Activated CD4-positive, alpha-beta memory T cell treated with anti-CD3 and anti-CD28 coated beads for 36 hours (primary cell): ENCODE measurements at regions of chr10 and their contacts with region 1.

Region 1: DNA sequence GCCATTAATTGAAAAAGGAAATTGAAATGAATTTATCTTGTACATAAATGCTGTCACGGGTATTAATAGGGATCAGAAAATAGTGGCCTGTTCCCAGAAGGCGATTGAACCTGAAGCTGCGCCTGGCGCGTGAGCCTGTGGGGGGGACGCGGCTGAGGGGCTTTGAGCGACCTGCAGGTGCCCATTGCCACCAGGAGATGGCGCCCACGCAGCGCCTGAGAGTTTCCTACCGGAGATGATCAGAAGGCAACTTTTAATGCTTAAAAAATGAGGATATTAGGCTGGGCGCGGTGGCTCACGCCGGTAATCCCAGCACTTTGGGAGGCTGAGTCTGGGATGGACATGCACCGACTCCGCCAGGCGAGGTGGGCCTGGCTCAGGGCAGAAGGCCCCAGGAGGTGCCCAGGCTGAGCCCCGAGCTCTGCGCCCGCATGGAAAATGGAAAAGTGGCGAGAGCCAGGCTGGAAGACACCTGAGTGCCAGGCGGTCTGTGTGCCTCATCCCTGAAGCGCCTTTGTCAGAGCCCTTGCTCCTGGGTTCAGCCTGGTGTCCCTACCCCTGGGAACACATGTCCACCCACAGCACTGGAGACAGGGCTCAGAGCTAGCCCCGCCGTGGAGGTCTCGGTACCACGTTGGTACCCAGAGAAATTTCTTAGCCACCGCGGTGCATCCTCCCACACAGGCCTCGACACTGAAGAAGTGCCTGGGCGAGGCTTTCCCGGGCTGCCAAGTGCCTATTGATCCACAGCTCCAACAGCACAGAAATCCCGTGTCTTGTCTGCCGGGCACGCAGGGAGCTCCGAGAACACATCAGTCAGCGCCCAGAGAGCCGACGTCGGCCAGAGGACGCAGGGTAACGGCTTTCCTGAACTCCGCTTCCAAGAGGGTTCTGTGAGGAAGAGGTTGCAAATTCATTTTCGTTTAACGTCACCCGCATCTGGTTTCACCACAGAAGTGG is 117.4 kb downstream of the INPP5A start:
- DNase-seq: peak; percentile 68
- H3K4me3 Mint-ChIP-seq: no peak overlapping the region
- H3K27ac Mint-ChIP-seq: no peak overlapping the region
- H3K4me1 Mint-ChIP-seq: no peaks in the 10 kb centered on the region
- H3K27me3 Mint-ChIP-seq: no peaks in the 10 kb centered on the region

Region 2: DNA sequence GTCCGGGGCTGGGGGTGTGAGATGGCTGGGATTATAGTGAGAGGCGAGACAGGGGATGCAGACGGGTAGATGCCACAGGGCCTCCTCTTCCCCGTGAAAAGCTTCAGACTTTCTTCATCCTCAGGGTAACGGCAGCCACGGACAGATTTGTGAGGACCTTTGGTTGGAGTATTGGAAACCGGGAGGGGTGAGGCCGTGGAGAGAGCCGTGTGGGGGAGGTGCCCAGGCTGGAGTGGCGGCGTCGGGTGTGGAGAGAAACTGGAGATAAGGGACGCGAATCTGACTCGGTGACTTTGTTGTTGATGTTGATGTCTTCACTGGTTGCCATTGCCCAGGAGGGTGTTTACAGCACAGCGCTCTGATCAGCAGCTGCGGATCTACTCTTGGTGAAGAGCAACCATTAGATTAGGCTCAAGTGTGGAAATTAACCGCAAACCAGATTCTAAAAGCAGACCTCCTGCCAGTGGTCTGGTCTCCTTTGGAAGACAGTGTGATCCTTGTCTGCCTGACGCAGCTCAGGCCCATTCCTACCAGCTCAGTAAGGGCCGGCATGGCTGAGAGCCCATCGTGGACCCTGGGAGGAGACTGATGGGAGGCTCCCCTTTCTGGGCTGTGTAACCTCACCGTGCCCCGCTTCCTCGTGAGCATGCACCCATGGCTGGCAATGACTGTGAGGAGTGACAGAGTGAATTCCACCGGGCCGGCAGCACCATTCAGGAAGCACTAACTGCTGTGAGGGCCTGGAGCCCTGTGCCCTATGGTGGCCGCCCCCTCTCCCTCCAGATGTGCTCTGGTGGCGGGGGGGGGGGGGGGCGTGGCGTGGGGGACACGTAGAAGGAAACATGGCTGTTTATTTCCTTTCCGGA is 27.1 kb before region 1 on chr10:
- CTCF ChIA-PET with region 1: no interaction called
- POLR2A ChIA-PET with region 1: no interaction called
- intact Hi-C with region 1: no loop called
- DNase-seq: peak; percentile 17
- H3K4me3 Mint-ChIP-seq: no peak overlapping the region
- H3K27ac Mint-ChIP-seq: no peak overlapping the region
- H3K4me1 Mint-ChIP-seq: peaks cover 13% of the 10 kb centered on the region
- H3K27me3 Mint-ChIP-seq: no peaks in the 10 kb centered on the region

Region 3: GRCh38 chr10:132665946-132666704 is 11.1 kb after region 1 on chr10:
- CTCF ChIA-PET with region 1: interaction called, 13 read pairs
- POLR2A ChIA-PET with region 1: no interaction called
- intact Hi-C with region 1: no loop called
- DNase-seq: peak; percentile 55
- H3K4me3 Mint-ChIP-seq: no peak overlapping the region
- H3K27ac Mint-ChIP-seq: no peak overlapping the region
- H3K4me1 Mint-ChIP-seq: peaks cover 12% of the 10 kb centered on the region
- H3K27me3 Mint-ChIP-seq: no peaks in the 10 kb centered on the region

Region 4: GRCh38 chr10:132788180-132788830 is 133.3 kb after region 1 on chr10:
- CTCF ChIA-PET with region 1: interaction called, 15 read pairs
- POLR2A ChIA-PET with region 1: no interaction called
- intact Hi-C with region 1: loop called (anchors 5 kb)
- DNase-seq: peak; percentile 20
- H3K4me3 Mint-ChIP-seq: no peak overlapping the region
- H3K27ac Mint-ChIP-seq: no peak overlapping the region
- H3K4me1 Mint-ChIP-seq: no peaks in the 10 kb centered on the region
- H3K27me3 Mint-ChIP-seq: peaks cover 15% of the 10 kb centered on the region

Region 5: DNA sequence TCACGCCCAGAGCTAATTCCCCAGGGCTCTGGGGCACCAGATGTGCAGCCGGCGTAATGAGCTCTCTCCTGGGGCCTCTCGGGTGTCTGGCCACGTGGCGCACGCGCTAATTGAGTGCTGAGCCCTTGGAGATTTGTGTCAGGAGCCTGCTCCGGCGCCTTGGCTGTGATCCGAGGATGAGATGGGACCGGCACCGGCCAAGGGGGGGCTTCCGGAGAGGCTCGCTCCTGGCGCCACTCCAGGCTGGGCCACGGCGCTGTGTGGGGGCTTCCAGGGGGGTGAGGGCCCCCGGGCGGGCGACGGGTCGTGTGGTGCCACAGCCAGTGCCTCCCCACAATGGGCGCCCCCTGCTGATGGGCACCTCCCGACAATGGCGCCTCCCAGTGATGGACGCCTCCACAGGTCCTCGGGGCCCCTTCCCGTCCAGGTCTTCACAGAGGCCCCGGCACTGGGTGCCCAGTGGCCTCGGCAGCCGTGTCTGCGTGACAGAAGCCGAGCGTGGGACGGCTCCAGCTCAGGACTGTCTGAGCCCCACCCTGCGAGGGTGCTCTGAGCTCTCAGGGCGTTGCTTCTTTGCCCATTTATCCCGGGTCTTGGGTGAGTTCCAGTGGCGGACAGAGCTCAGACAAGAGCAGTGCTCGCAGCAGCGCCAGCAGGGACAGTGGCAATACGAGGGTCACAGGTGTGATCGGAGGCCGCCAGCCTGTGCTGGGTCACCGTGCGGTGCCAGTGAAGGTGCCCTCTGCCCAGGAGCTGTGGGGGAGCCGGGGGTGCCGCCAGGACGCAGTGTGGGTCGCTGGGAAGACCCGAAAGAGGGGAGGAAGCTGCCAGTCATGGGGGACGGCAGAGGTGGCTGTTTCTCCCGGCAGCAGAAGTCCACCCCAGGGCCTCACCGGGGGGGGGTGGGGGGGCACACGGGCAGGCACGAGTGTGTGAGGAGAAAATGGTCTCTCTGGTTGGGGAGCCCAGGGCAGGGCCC is 139.2 kb after region 1 on chr10:
- CTCF ChIA-PET with region 1: interaction called, 15 read pairs
- POLR2A ChIA-PET with region 1: no interaction called
- intact Hi-C with region 1: loop called (anchors 5 kb)
- DNase-seq: no peak
- H3K4me3 Mint-ChIP-seq: no peak overlapping the region
- H3K27ac Mint-ChIP-seq: no peak overlapping the region
- H3K4me1 Mint-ChIP-seq: no peaks in the 10 kb centered on the region
- H3K27me3 Mint-ChIP-seq: peaks cover 3% of the 10 kb centered on the region